Natural killer cell (primary cell): ENCODE measurements at regions of chr18 and their contacts with region 1.

Region 1: GRCh38 chr18:24488824-24489493 is 28.5 kb downstream of the HRH4 start:
- DNase-seq: peak in 1 of 2 donors; percentile 64
- ATAC-seq: peak; percentile 37 to 51 (median 39)
- H3K4me3 ChIP-seq: no peak overlapping the region
- H3K4me3 Mint-ChIP-seq: no peak overlapping the region
- H3K27ac ChIP-seq: no peak overlapping the region
- H3K27ac Mint-ChIP-seq: no peak overlapping the region
- H3K4me1 ChIP-seq: peaks cover 13% of the 10 kb centered on the region
- H3K4me1 Mint-ChIP-seq: peaks cover 28 to 35% of the 10 kb centered on the region in 2 donors
- H3K27me3 ChIP-seq: no peaks in the 10 kb centered on the region
- H3K27me3 Mint-ChIP-seq: peaks cover 11 to 27% of the 10 kb centered on the region in 2 donors
- CTCF ChIP-seq: peak; percentile 84

Region 2: DNA sequence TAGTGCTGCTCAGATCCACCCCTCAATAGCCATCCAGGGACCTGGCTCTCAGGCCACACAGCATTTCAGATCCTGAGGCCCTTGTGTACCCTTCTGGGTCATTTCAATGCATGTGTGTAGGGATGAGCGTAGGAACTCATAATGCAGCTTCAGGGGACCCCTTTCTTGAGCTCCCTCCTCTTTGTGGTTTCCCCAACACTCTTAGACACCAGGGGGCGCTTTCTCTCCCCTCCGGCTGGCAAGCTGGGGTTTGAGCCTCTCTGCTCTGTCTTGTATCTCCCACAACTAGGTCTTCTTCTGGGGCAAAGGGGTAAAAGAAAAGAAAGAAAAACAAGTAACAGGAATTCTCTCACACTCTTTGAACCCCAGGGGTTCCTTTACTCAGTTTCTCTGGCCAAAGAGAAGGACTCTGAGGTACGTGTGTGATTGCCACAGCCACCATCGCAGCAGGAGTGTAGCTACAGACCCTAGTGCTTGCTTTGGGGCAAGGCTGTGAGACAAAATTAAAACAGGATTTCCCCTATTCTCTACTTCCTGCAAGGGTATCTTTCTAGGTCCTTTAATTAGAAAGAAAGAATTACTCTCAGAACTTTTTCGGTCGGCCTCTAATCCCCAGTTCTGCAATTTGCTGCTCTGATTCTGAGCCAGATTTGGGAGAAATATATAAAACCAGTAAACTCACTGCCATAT is 312.1 kb before region 1 on chr18:
- intact Hi-C with region 1: loop called (anchors 5 kb)
- DNase-seq: peak in 1 of 2 donors; percentile 46
- ATAC-seq: peak in 1 of 3 donors; percentile 33
- H3K4me3 ChIP-seq: no peak overlapping the region
- H3K4me3 Mint-ChIP-seq: no peak overlapping the region
- H3K27ac ChIP-seq: peak overlapping the region; percentile 35
- H3K27ac Mint-ChIP-seq: no peak overlapping the region
- H3K4me1 ChIP-seq: no peaks in the 10 kb centered on the region
- H3K4me1 Mint-ChIP-seq: no peaks in the 10 kb centered on the region
- H3K27me3 ChIP-seq: no peaks in the 10 kb centered on the region
- H3K27me3 Mint-ChIP-seq: peaks cover 6 to 12% of the 10 kb centered on the region in 2 donors
- CTCF ChIP-seq: no peak

Region 3: DNA sequence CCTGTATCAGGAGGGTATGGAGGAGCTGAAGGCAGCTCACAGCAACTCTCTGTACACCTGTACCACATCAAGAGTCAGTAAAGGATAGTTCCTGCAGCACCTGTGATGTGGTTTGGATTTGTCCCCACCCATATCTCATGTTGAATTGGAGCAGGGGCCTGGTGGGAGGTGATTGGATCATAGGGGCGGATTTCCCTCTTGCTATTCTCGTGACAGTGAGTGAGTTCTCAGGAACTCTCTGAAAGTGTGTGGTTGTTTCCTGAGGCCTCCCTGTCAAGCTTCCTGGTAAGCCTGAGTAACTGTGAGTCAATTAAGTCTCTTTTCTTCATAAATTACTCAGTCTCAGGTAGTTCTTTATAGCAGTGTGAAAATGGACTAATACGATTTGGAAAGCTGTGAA is 120.2 kb before region 1 on chr18:
- intact Hi-C with region 1: loop called (anchors 10 kb)
- DNase-seq: peak in 1 of 2 donors; percentile 8
- ATAC-seq: no peak
- H3K4me3 ChIP-seq: no peak overlapping the region
- H3K4me3 Mint-ChIP-seq: no peak overlapping the region
- H3K27ac ChIP-seq: no peak overlapping the region
- H3K27ac Mint-ChIP-seq: no peak overlapping the region
- H3K4me1 ChIP-seq: no peaks in the 10 kb centered on the region
- H3K4me1 Mint-ChIP-seq: no peaks in the 10 kb centered on the region
- H3K27me3 ChIP-seq: no peaks in the 10 kb centered on the region
- H3K27me3 Mint-ChIP-seq: peaks cover 0 to 13% of the 10 kb centered on the region in 2 donors
- CTCF ChIP-seq: no peak

Region 4: GRCh38 chr18:24553571-24554285 is 64.8 kb after region 1 on chr18:
- intact Hi-C with region 1: no loop called
- DNase-seq: no peak
- ATAC-seq: no peak
- H3K4me3 ChIP-seq: no peak overlapping the region
- H3K4me3 Mint-ChIP-seq: no peak overlapping the region
- H3K27ac ChIP-seq: no peak overlapping the region
- H3K27ac Mint-ChIP-seq: no peak overlapping the region
- H3K4me1 ChIP-seq: no peaks in the 10 kb centered on the region
- H3K4me1 Mint-ChIP-seq: no peaks in the 10 kb centered on the region
- H3K27me3 ChIP-seq: no peaks in the 10 kb centered on the region
- H3K27me3 Mint-ChIP-seq: peaks cover 10 to 23% of the 10 kb centered on the region in 2 donors
- CTCF ChIP-seq: no peak

Region 5: GRCh38 chr18:24726727-24727492 is 238.0 kb after region 1 on chr18:
- intact Hi-C with region 1: loop called (anchors 1 kb)
- DNase-seq: peak; percentile 27 to 79
- ATAC-seq: peak in 1 of 3 donors; percentile 45
- H3K4me3 ChIP-seq: no peak overlapping the region
- H3K4me3 Mint-ChIP-seq: no peak overlapping the region
- H3K27ac ChIP-seq: no peak overlapping the region
- H3K27ac Mint-ChIP-seq: no peak overlapping the region
- H3K4me1 ChIP-seq: no peaks in the 10 kb centered on the region
- H3K4me1 Mint-ChIP-seq: peaks cover 0 to 4% of the 10 kb centered on the region in 2 donors
- H3K27me3 ChIP-seq: no peaks in the 10 kb centered on the region
- H3K27me3 Mint-ChIP-seq: peaks cover 11% of the 10 kb centered on the region in 2 donors
- CTCF ChIP-seq: peak; percentile 74